Panc1 (cell line): ENCODE measurements at regions of chr18 and their contacts with region 1.

Region 1: DNA sequence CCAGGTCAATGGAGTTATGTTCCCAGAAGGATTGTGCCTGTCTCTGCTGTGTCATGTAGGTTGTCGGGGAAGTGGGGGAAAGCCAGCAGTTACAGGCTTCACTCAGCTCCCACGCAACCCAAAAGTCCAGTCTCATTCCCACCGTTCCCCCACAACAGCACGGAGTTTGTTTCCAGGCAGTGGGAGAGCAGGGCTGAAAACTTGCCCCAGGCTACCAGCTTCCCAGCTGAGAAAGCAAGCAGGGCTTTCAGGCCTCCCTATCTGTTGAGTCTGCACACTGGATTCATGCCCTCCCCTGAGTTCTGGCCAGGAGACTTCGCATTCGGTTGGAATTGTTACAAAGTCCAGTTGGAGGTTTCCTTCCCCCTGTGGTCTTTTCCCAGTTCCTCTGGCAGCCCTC is 76.3 kb downstream of the TMX3 start:
- DNase-seq: no peak
- ATAC-seq: no peak
- H3K4me3 ChIP-seq: no peak overlapping the region
- H3K27ac ChIP-seq: no peak overlapping the region
- H3K4me1 ChIP-seq: no peaks in the 10 kb centered on the region
- H3K27me3 ChIP-seq: no peaks in the 10 kb centered on the region
- CTCF ChIP-seq: no peak

Region 2: GRCh38 chr18:67705748-67706147 is 932.9 kb before region 1 on chr18:
- CTCF ChIA-PET with region 1: no interaction called
- POLR2A ChIA-PET with region 1: no interaction called
- in situ Hi-C with region 1: no loop called
- intact Hi-C with region 1: loop called (anchors 5 kb)
- DNase-seq: no peak
- ATAC-seq: no peak
- H3K4me3 ChIP-seq: no peak overlapping the region
- H3K27ac ChIP-seq: no peak overlapping the region
- H3K4me1 ChIP-seq: no peaks in the 10 kb centered on the region
- H3K27me3 ChIP-seq: no peaks in the 10 kb centered on the region
- CTCF ChIP-seq: no peak

Region 3: GRCh38 chr18:68438983-68439382 is 199.6 kb before region 1 on chr18:
- CTCF ChIA-PET with region 1: no interaction called
- POLR2A ChIA-PET with region 1: no interaction called
- in situ Hi-C with region 1: no loop called
- intact Hi-C with region 1: no loop called
- DNase-seq: no peak
- ATAC-seq: no peak
- H3K4me3 ChIP-seq: no peak overlapping the region
- H3K27ac ChIP-seq: no peak overlapping the region
- H3K4me1 ChIP-seq: no peaks in the 10 kb centered on the region
- H3K27me3 ChIP-seq: no peaks in the 10 kb centered on the region
- CTCF ChIP-seq: no peak